ENCODE measurements at regions of chr15 and their contacts with region 1.

Region 1: DNA sequence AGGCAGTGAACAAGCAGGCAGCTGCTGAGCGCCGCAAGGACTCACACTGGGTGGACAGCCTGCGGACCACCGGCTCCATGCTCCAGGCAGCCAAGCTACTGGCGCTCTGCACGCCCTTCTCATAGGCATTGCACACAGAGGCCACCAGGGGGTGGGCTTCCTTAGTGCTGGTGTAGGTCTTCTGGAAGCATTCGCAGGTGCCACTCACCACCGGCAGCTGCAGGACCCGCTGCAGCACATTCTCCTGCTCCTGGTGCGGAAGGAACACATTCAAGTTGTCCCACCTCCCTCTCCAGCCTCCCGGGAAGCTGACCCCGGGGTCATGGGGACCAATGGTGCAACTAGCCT is 6.0 kb downstream of the PLIN1 start:
- DNase-seq: no peak
- H3K4me3 ChIP-seq: no peak overlapping the region
- H3K27ac ChIP-seq: no peak overlapping the region
- H3K4me1 ChIP-seq: no peaks in the 10 kb centered on the region
- H3K27me3 ChIP-seq: no peaks in the 10 kb centered on the region
- CTCF ChIP-seq: no peak
- POLR2A ChIP-seq: no peak

Region 2: GRCh38 chr15:89334510-89335288 is 338.4 kb before region 1 on chr15 and contains the start of gene POLG:
- intact Hi-C with region 1: loop called (anchors 5 kb)
- DNase-seq: peak; percentile 98 to 99
- H3K4me3 ChIP-seq: peak within 1 kb of the TSS; percentile 72 to 97 (median 94)
- H3K27ac ChIP-seq: peak within 1 kb of the TSS; percentile 90 to 97
- H3K4me1 ChIP-seq: peaks cover 6 to 12% of the 10 kb centered on the region in 2 donors
- H3K27me3 ChIP-seq: no peaks in the 10 kb centered on the region
- CTCF ChIP-seq: peak in 1 of 3 donors; percentile 14
- POLR2A ChIP-seq: peak; percentile 66
- total RNA-seq, gene POLG: 50.6 to 59.6 (median 53.3) TPM

Region 3: GRCh38 chr15:89794627-89795241 is 121.6 kb after region 1 on chr15:
- intact Hi-C with region 1: no loop called
- DNase-seq: no peak
- H3K4me3 ChIP-seq: peak overlapping the region in 1 of 3 donors; percentile 26
- H3K27ac ChIP-seq: peak overlapping the region; percentile 26 to 35
- H3K4me1 ChIP-seq: peaks cover 0 to 4% of the 10 kb centered on the region in 2 donors
- H3K27me3 ChIP-seq: no peaks in the 10 kb centered on the region
- CTCF ChIP-seq: no peak
- POLR2A ChIP-seq: no peak